GM10248 (cell line): ENCODE measurements at regions of chr1 and their contacts with region 1.

Region 1: GRCh38 chr1:25895365-25895993 is 10.7 kb downstream of the STMN1 start:
- DNase-seq: peak; percentile 96
- CTCF ChIP-seq: peak; percentile 96

Region 2: DNA sequence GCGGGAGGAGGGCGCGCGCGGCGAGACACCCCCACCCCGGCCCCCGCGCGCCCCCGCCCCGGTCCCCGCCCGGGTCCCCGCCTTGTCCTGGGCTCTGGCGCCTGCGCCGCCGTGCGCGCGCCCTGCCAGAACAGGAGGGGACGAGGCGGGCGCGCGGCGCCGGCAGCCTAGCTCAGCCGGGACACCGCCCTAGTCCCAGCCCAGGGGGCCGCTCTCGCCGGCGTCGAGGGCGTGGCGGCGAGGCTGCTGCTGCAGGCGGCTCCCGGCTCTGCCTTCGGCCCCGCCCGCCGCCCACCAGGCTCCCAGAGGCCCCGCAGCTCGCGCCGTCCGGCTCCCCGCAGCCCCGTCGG is 1392.8 kb before region 1 on chr1 and contains the start of gene RCAN3:
- CTCF ChIA-PET with region 1: no interaction called
- POLR2A ChIA-PET with region 1: no interaction called
- DNase-seq: peak; percentile 94
- CTCF ChIP-seq: no peak

Region 3: GRCh38 chr1:25848531-25848930 is 46.9 kb before region 1 on chr1:
- CTCF ChIA-PET with region 1: interaction called, 19 read pairs
- POLR2A ChIA-PET with region 1: no interaction called
- DNase-seq: no peak
- CTCF ChIP-seq: no peak

Region 4: GRCh38 chr1:25874934-25875855 is 20.3 kb before region 1 on chr1 and contains the start of gene PAQR7:
- CTCF ChIA-PET with region 1: interaction called, 59 read pairs
- POLR2A ChIA-PET with region 1: no interaction called
- DNase-seq: peak; percentile 83
- CTCF ChIP-seq: peak; percentile 41

Region 5: DNA sequence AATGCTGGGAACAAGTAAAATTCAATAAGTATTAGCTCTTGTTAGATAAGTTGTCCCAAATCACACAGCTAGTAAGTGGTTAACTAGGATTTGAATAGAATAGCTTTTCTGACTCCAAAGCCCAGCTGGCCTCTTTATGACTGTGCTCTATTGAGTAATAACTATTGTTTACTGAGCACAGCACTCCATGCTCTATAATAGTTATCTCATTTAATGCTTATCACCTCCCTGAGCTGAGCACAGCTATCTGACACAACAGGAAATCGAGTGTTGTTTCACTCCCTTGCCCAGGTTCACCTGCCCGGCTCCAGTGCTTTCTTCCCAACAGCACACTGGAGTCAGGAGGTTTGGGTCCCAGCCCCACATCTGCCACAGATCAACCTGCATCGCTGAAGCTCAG is 49.5 kb after region 1 on chr1:
- CTCF ChIA-PET with region 1: interaction called, 12 read pairs
- POLR2A ChIA-PET with region 1: no interaction called
- DNase-seq: no peak
- CTCF ChIP-seq: no peak

Region 6: GRCh38 chr1:25979210-25979609 is 83.7 kb after region 1 on chr1:
- CTCF ChIA-PET with region 1: interaction called, 10 read pairs
- POLR2A ChIA-PET with region 1: no interaction called
- DNase-seq: no peak
- CTCF ChIP-seq: no peak

Region 7: DNA sequence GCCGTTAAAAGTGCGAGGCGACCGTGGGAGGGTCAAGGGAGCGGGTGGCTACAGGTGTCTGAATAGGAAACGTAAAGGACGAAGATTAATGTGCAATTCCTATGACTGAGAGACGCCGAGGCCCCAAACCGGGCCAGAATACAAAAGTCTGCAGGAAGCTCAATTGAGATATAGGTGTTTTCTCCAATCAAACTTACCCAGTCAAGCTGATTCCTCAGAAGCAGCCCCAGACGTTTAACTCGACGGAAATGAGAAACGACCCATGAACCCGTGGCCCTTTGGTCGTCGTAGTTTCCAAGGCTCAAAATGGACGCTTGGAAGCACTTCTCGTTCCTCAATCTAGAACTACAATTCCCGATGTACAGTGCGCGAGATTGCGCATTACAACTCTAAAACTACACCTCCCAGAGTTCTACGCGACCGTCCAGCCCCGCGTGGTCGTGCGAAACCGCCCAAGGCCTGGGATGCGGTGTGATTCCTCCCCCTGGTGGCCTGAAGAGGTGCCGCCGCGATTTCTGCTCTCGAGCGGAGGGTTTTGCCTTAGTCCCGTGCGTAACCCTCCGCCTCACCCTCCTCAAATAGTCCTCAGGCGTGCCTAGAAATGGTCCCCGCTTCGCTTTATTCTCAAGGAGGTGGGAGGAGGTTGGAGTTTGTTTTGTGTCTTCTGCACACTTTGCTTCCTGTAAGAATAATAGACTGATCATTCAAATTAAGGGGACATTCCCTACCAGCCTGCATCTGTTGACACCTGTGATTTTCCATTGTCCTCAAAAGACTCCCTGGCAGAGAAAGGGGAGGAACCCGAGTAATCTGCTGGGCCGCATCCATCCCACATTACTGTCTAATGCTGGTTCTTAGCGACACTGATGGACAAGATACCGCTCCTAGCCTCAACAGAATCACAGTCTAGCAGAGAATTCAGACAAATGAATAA is 102.6 kb after region 1 on chr1 and contains the start of gene PAFAH2:
- CTCF ChIA-PET with region 1: interaction called, 357 read pairs
- POLR2A ChIA-PET with region 1: interaction called, 7 read pairs
- DNase-seq: peak; percentile 93
- CTCF ChIP-seq: peak; percentile 97

Region 8: DNA sequence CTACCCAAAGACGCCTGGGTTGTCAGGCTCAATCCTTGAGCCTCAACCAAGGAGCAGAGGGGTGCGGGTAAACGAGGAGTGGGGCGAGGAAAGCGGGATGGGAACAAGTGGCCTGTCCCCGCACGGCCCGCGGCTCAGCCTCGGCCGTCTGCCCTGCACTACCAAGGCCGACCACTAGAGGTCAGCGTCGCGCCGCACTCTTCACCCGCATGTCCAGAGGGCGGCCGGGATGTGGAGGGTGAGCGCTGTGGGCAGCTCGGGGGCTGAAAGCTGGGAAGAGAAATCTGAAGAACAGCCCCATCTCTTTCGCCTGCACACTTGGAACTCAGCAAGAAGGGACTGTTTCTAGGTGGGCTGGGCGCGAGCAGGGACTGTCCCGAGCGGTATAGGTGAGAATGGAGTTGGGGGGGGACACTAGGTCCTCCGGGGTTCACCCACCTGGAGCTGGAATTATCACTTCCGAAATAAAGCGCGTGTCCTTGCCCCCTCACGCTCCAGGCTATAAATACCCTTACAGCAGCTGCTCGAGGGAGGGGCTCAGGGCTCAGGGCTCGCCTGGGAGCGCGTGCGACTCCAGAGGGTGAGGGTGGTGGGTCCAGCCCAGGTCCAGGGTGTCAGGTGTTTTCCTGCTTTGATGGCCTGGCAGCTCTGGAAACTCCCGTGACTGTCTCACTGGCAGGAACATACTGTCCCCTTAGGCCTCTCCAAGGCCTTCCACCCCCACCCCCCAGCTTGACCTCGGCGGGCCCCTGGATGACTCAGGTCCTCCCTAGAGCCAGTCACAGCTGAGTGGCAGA is 140.7 kb after region 1 on chr1:
- CTCF ChIA-PET with region 1: interaction called, 13 read pairs
- POLR2A ChIA-PET with region 1: no interaction called
- DNase-seq: peak; percentile 92
- CTCF ChIP-seq: peak; percentile 99